ENCODE measurements at regions of chr10 and their contacts with region 1.

Region 1: DNA sequence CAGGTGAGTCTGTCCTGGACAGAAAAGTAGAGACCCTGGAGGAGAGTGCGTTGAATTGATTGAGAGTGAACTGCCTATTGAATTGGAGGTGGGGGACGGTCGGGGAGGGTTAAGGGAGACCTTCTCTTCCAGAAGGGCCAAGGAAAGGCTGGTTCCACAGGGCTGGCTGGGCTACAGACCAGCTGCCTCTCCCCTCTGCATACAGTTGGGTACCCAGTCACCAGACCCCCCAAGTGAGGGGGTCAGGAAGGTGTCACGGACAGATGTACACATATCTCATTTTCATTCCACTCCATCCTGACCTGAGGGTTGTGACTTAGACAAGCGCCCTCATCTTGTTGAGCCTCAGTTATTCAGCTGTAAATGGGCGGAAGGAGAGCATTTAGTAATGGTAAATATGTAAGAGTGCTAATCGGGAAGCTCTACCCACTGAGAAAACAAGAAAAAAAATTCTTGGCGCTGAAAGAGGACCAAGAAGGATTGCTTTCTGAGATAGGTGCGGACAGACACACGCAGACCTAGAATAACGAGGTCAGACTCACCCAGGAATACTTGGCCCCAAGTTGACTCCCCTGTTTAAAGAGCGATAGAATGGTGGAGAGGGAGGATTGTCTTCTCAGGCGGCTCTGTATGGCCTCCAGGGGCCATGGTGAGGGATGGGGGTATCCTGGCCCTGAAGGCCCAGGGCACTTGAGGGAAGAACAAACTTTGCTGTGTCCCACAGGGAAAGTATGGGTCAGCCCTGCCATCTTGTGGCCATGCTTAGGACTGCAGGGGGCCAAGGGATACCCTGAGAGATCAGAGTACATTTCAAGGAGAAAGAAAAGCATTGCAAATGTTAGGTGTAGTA is 7.2 kb upstream of the MBL2 start:
- DNase-seq: peak; percentile 11
- H3K4me3 Mint-ChIP-seq: no peak overlapping the region
- H3K27ac Mint-ChIP-seq: no peak overlapping the region
- H3K4me1 Mint-ChIP-seq: no peaks in the 10 kb centered on the region
- H3K27me3 Mint-ChIP-seq: no peaks in the 10 kb centered on the region

Region 2: DNA sequence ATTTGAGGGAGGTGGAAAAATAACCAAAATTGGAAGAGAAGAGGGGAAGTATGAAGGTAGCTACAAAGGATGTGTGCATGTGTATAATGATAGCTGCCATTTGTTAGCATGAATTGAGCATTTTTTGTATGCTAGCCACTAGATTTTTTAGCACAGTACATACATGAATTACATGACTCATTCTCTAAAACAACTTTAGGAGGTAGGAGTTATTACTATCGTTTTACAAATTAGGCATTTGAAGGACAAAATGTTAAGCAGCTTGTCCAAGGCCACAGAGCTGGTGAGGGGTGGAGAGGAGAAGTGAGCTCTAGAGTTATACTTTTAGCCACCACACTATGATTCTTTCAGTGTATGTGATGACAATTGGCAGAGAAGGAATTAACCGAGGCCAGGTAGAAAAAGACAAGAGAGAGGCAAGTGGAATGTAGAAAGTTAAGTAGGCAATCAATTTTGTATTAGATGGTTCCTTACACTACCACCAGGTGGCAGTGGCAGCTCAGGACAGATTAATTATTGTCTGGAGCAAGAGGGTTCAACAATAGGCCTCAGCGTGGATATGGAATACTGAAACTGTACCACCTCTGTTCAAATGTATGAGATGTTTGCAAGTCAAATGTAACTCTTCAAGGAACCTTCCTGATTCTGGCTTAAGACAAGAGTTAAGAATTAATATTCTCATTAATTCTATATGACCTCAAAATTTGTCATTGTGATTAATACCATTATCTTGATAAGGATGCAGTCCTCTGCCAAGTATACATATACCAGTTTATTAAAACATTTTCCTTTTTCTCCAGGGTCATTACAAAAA is 135.2 kb before region 1 on chr10:
- intact Hi-C with region 1: loop called (anchors 1 kb)
- DNase-seq: no peak
- H3K4me3 Mint-ChIP-seq: no peak overlapping the region
- H3K27ac Mint-ChIP-seq: no peak overlapping the region
- H3K4me1 Mint-ChIP-seq: no peaks in the 10 kb centered on the region
- H3K27me3 Mint-ChIP-seq: no peaks in the 10 kb centered on the region

Region 3: DNA sequence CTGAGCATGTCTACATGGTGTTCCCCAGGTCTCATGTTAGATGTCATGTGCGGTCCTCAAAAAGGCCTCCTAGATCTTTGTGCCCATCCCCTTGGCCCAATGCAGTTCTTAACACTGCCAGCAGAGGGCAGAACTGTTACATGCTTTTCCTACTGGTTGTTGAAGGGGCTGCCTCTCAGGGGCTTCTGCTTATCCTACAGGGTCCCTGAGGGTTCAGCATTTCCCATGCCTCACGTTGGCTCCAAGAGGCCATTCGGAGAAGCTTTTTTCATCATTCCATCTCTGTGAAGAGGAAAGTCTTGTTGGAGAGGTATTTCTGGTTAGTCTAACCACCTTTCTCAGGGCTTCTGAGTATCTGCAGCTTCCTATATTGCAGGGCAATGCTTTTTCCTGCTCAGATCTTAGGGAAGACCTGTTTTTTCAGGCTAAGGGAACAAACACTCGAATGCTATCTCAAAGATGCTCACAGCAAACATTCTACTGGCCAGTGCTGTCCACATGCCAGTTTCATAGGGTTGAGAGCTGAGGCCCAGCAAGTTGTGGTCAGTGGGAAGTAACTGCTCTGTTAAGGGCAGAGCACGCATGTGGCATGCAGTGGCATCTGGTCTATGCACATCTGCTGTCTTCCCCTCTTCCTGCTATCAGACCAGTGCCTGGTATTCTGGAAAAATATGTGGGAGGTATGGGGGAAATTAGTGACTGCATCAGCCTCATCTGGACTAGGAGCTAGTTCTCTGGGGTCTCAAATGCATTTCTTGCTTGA is 38.7 kb before region 1 on chr10:
- intact Hi-C with region 1: loop called (anchors 1 kb)
- DNase-seq: peak; percentile 9
- H3K4me3 Mint-ChIP-seq: no peak overlapping the region
- H3K27ac Mint-ChIP-seq: no peak overlapping the region
- H3K4me1 Mint-ChIP-seq: no peaks in the 10 kb centered on the region
- H3K27me3 Mint-ChIP-seq: no peaks in the 10 kb centered on the region